Activated naive CD4-positive, alpha-beta T cell treated with anti-CD3 and anti-CD28 coated beads for 36 hours (primary cell): ENCODE measurements at regions of chr2 and their contacts with region 1.

Region 1: GRCh38 chr2:174039551-174040416 is 74.6 kb upstream of the SP3 start:
- DNase-seq: peak; percentile 92
- H3K4me3 Mint-ChIP-seq: peak overlapping the region; percentile 35
- H3K27ac Mint-ChIP-seq: peak overlapping the region; percentile 86
- H3K4me1 Mint-ChIP-seq: peaks cover 13% of the 10 kb centered on the region
- H3K27me3 Mint-ChIP-seq: no peaks in the 10 kb centered on the region

Region 2: DNA sequence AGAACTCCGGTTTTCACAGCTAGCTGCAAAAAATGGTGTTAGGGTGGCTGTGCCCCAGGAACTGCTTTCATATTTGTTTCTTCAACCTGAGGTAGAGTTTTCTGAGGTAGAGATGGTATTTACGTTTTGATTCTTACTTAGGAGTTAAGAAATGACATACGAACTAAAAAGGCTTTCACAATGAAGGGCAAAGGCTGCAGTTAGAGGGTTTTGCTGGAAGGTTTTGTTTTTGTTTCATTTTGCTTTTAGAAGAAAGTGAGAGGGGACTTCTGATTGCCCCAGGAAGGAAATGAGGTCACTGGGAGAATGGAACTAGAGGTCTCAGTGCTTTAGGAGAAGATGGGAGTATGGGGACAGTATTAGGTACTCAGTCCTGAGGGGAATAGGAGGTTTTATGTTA is 669.6 kb before region 1 on chr2:
- CTCF ChIA-PET with region 1: no interaction called
- intact Hi-C with region 1: no loop called
- DNase-seq: no peak
- H3K4me3 Mint-ChIP-seq: no peak overlapping the region
- H3K27ac Mint-ChIP-seq: peak overlapping the region; percentile 56
- H3K4me1 Mint-ChIP-seq: peaks cover 14% of the 10 kb centered on the region
- H3K27me3 Mint-ChIP-seq: no peaks in the 10 kb centered on the region

Region 3: DNA sequence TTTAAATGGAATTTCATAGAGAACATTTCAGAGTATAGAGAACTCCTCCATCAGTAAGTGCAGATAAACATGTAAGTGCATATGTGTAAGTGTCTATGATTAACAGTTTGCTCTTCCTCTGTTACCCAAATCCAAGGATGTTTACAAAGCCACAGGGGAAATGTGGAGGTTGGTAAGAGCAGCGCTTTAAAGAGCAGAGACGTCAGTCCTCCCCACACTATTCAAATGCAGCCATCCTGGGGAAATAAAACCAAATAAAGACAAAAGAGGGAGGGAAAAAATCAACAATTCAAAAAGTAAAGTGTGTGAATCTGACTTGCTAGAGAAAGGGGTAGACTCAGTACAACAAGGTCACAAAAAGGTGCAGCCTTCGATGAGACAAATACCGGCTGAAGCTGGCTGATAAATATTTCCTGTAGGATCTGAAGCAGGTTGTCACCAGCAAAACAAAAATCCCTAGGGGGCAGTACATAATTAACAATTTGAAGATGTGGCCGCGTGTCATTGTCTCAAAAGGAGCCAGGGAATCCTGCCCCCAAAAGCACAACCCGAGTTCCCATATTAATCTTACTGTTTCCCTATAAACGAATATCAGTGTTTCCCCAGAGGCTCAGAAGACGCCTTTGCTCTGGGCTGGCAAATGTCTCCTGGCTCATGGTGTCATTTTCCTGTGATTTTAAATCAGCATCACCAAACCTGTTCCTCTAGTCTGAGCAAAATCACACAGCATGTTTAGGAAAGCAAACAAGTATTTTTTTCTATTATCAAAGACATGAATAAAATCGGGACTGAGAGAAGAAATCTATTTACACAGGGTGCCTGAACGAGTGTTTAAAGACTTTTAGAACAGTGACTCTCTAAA is 468.5 kb before region 1 on chr2:
- CTCF ChIA-PET with region 1: no interaction called
- intact Hi-C with region 1: loop called (anchors 5 kb)
- DNase-seq: peak; percentile 8
- H3K4me3 Mint-ChIP-seq: no peak overlapping the region
- H3K27ac Mint-ChIP-seq: no peak overlapping the region
- H3K4me1 Mint-ChIP-seq: peaks cover 4% of the 10 kb centered on the region
- H3K27me3 Mint-ChIP-seq: peaks cover 6% of the 10 kb centered on the region

Region 4: DNA sequence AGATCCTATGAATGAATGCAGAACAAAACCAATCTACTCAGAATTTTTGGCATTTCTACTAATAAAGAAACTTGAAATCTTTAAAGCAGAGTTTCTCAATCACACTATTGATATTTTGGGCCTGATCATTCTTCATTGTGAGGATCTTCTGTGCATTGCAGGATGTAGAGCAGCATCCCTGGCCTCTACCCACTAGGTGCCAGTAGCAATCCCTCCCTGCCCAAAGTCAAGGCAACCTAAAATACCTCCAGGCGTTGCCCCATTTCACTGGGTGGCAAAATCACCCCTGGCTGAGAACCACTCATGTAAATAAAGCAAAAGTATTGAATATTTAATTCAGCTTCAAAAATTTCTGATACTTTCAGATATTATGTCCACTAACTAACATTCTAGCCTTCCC is 287.6 kb before region 1 on chr2:
- CTCF ChIA-PET with region 1: no interaction called
- intact Hi-C with region 1: loop called (anchors 10 kb)
- DNase-seq: peak; percentile 19
- H3K4me3 Mint-ChIP-seq: no peak overlapping the region
- H3K27ac Mint-ChIP-seq: no peak overlapping the region
- H3K4me1 Mint-ChIP-seq: no peaks in the 10 kb centered on the region
- H3K27me3 Mint-ChIP-seq: peaks cover 7% of the 10 kb centered on the region

Region 5: DNA sequence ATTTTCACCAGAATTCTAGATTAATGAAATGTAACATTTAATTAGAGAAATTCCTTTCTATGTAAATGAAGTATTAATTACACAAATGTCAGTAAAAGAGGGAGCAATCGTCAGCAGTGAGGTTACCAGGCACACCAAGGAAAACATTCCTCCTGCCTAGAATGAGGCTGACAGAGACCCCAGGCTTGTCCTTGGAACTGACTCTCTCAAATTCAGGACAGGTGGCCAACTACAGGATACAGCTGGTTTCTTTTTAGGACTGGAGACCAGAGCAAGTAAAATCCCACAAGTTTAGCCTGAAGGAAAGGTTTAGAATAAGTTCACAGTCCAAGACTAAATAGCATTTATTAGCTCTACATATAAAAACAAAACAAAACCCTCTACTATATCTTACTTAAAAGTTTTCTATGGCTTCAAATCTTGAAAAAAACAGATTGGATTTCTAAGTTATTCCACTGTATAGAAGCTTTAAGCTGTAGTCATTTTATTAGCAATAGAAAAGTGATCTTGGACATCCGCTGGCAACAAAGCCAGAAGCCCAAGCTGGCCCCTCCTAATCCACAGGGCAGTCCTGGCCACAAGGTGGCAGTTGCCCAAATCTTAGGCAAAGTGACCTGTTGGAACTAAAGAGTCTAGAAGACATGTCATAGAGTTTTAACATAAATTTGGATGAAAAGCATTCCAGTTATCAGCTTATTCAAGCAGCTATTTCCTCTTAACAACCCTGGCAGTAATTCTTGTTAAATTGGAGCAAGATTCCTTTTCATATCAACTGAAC is 155.6 kb before region 1 on chr2:
- CTCF ChIA-PET with region 1: no interaction called
- intact Hi-C with region 1: loop called (anchors 1 kb)
- DNase-seq: peak; percentile 38
- H3K4me3 Mint-ChIP-seq: no peak overlapping the region
- H3K27ac Mint-ChIP-seq: no peak overlapping the region
- H3K4me1 Mint-ChIP-seq: no peaks in the 10 kb centered on the region
- H3K27me3 Mint-ChIP-seq: peaks cover 5% of the 10 kb centered on the region

Region 6: DNA sequence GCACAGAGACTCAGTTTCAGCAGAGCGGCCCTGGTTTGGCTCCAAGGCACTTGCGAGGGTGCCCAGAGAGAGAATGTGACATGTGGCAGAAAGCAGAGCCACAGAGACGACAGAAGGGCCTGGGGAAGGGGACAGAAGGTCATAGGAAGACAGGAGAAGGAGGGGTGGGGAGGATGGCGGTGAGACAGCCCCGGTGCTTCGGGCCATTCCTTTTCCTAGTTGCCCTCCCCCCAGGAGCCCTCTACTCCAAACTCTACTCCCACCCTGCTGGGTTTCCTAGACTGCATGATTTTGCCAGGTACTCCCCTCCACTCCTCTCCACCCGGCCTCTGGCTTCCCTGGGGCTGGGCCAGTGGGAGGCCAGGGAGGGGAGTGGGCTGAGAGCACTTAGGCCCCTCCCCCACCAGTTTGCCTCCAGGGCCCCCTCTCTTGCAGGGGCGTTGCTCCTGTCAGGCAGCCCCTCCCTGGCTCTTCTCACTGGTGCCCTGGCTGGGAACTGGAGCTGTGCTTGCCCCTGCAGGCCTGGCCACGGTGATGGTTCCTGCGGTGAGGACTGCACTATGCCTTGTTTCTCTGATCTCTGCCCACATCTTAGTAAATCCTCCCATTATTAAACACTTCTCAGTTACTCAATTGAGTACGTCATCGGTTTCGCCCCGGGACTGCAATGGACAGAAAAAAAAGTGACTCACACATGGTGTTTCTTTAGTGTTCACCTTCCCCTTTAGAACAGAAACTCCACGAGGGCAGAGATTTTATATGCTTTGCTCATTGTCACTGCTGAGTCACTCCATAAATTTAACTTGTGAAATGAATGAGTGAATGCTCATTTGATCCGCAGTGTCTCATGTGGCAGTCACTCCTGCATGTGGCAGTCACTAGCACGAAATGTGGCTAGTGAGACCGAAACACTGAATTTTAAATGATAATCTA is 15.9 kb before region 1 on chr2:
- CTCF ChIA-PET with region 1: interaction called, 3 read pairs
- intact Hi-C with region 1: loop called (anchors 1 kb)
- DNase-seq: peak; percentile 61
- H3K4me3 Mint-ChIP-seq: no peak overlapping the region
- H3K27ac Mint-ChIP-seq: peak overlapping the region; percentile 19
- H3K4me1 Mint-ChIP-seq: peaks cover 8% of the 10 kb centered on the region
- H3K27me3 Mint-ChIP-seq: no peaks in the 10 kb centered on the region

Region 7: GRCh38 chr2:174248187-174248997 is 208.6 kb after region 1 on chr2 and contains the start of gene OLA1:
- CTCF ChIA-PET with region 1: no interaction called
- intact Hi-C with region 1: loop called (anchors 1 kb)
- DNase-seq: peak; percentile 97
- H3K4me3 Mint-ChIP-seq: peak within 1 kb of the TSS; percentile 84
- H3K27ac Mint-ChIP-seq: peak within 1 kb of the TSS; percentile 79
- H3K4me1 Mint-ChIP-seq: peaks cover 25% of the 10 kb centered on the region
- H3K27me3 Mint-ChIP-seq: no peaks in the 10 kb centered on the region
- total RNA-seq, gene OLA1: 140 to 142 TPM